ENCODE measurements at regions of chr4 and their contacts with region 1.

Region 1: DNA sequence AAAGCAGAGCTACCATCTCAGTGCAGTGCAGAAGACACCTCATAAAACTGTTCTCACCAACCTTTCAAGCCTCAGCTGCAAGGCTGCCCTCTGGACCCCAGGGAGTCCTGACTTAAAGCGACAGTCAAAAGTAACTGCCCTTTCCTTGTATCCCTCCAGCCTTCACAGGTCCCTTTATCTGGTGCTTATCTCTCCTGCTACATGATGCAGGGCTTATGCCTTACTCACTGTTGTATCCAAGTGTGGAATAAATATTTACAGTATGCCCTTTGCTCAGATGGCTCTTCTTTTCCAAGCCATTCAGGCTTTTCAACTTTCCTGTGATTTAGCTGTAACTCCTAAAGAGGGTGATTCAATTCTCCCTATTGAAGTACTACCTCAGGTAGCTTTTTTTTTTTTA is 92.6 kb downstream of the KDR start:
- DNase-seq: peak; percentile 13 to 50
- H3K4me3 ChIP-seq: no peak overlapping the region
- H3K4me3 Mint-ChIP-seq: no peak overlapping the region
- H3K27ac Mint-ChIP-seq: no peak overlapping the region
- H3K4me1 ChIP-seq: peaks cover 26% of the 10 kb centered on the region
- H3K4me1 Mint-ChIP-seq: peaks cover 17% of the 10 kb centered on the region
- H3K27me3 ChIP-seq: no peaks in the 10 kb centered on the region
- H3K27me3 Mint-ChIP-seq: peaks cover 2% of the 10 kb centered on the region
- CTCF ChIP-seq: no peak

Region 2: DNA sequence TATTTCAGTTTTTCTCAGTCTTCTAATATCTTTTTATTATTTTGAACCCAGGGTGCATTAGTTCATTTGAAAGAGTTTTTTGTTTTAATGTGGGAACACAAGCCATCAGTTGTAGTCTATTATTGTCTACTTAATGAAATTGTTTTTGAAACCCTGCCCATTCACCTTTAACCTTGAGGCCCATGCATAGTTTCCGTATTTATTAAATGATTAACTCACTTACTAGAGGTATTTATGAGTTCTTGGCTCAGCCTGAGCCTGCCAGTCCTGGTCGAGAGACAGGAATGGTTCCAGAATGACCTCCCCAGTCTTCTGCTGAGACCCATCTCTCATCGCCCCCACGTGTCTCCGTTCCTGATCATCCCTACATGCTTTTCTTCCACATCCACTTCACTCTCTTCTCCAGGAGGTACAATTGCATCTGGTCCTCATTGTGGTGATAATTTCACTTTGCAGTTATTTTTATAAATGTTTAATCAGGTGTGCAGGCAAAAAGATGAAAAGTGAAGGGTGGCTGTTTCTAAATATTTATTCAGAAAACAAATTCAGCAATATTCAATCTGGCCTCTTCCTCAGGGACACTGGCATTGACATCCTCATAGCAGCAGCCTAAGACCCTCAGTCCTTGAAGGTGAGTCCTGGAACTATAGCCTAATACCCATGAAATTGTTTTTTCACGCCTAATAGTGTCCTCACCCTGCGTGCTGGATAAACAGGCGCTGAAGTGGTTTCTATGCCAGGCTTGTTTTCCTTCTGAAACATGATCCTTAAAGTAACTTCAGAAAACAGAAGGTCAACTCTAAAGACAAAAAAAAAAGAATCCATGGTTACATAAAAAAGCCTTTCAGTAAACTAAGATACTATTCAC is 20.2 kb before region 1 on chr4:
- CTCF ChIA-PET with region 1: no interaction called
- POLR2A ChIA-PET with region 1: no interaction called
- intact Hi-C with region 1: loop called (anchors 2 kb)
- DNase-seq: no peak
- H3K4me3 ChIP-seq: no peak overlapping the region
- H3K4me3 Mint-ChIP-seq: no peak overlapping the region
- H3K27ac Mint-ChIP-seq: no peak overlapping the region
- H3K4me1 ChIP-seq: peaks cover 15% of the 10 kb centered on the region; the same call in 1 of the 2 replicates
- H3K4me1 Mint-ChIP-seq: no peaks in the 10 kb centered on the region
- H3K27me3 ChIP-seq: no peaks in the 10 kb centered on the region
- H3K27me3 Mint-ChIP-seq: no peaks in the 10 kb centered on the region
- CTCF ChIP-seq: no peak

Measured in Caco-2 (cell line).